ENCODE measurements at regions of chr4 and their contacts with region 1.

Region 1: DNA sequence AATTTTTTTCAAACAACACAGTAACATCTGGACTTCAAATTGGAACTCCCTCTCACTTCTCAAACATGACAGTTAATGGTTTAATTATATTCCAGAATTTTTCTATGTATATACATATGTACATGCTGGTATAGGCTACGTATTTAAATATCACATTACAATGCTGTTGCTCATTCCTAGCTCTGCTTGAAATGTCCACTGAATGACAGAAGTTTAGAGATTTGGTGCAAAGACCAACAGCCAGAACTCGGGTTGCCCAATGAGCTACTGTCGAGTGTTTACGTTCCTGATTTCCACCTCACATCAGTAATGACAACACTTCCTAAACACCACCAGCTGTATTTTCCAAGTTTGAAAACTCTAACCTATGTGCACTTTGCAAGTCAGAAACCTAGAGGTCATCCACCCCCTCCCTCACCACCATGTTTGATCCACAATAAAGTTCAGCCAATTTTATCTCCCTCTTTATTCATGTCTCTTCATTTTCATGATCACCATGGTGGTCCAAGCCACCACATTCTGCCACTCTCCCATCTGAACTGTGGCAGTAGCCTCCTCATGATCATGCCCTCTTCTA is 49.3 kb upstream of the RPL34 start:
- DNase-seq: no peak
- H3K4me3 ChIP-seq: no peak overlapping the region
- H3K27ac ChIP-seq: no peak overlapping the region
- H3K4me1 ChIP-seq: no peaks in the 10 kb centered on the region
- H3K27me3 ChIP-seq: no peaks in the 10 kb centered on the region
- CTCF ChIP-seq: no peak
- POLR2A ChIP-seq: no peak

Region 2: DNA sequence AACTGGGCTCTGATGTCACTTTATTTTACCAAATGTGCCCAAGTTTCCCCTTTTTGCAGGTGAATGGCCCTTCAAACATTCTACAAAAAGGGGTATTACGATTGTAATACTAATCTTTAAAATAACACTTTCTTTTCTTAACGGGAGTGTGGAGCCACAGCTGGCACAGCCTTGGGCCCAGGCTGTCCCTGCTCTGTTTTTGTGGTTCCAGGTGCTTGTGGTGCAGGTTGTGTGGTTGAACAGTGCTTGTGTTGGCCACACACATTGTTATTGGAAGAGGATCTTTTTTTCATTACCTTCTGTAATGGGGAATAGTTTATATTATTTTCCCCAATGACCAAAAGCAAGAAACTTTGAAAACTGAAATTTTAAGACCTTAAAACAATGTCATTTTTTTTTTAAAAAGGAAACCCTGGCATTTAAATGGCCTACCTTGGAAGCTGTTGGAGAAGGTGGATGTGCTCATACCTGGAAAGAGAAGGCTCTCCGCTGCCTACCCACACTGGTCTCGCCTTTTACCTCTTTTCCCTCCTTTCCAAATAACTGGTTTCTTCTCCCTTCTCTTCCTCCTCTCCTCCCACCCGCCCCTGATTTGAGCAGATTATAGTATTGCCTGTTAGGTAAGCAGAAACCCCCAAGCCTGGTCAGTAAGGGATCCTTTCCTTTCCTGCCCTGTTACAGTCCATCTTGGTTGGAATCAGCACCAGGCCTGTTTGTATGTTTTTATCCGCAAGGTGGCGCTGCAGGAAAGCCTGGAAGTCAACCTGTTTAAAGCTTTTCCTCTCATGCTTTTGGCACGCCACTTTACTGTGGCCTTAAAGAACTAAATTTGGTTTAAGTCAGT is 552.8 kb before region 1 on chr4:
- intact Hi-C with region 1: loop called (anchors 2 kb)
- DNase-seq: peak; percentile 79
- H3K4me3 ChIP-seq: no peak overlapping the region
- H3K27ac ChIP-seq: no peak overlapping the region
- H3K4me1 ChIP-seq: no peaks in the 10 kb centered on the region
- H3K27me3 ChIP-seq: no peaks in the 10 kb centered on the region
- CTCF ChIP-seq: peak; percentile 74 to 84 (median 76)
- POLR2A ChIP-seq: no peak

Region 3: GRCh38 chr4:108700081-108700757 is 129.1 kb after region 1 on chr4:
- intact Hi-C with region 1: no loop called
- DNase-seq: no peak
- H3K4me3 ChIP-seq: no peak overlapping the region
- H3K27ac ChIP-seq: no peak overlapping the region
- H3K4me1 ChIP-seq: no peaks in the 10 kb centered on the region
- H3K27me3 ChIP-seq: no peaks in the 10 kb centered on the region
- CTCF ChIP-seq: no peak
- POLR2A ChIP-seq: no peak